A549 (cell line): ENCODE measurements at regions of chr14 and their contacts with region 1.

Region 1: DNA sequence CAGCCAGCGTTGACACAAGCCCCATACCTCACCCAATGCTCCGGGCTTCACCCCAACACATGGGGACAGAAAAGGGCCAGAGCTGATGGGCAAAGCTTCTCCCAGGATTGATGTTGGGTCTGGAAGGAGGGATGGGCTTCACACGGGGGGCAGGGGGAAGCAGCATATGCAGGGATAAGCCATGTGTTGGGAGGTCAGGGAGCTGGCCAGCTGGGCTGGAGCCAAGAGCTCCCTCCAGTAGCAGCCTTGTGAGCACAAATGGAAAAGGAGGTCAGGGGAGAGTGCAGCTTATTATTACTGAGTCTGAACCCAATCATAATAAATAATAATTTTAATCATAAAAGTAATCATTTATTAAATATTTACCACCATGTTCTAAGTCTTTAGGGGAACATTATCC is 9.3 kb downstream of the PLEKHD1 start:
- DNase-seq: no peak
- ATAC-seq: no peak
- H3K4me3 ChIP-seq: no peak overlapping the region
- H3K27ac ChIP-seq: no peak overlapping the region
- H3K4me1 ChIP-seq: no peaks in the 10 kb centered on the region
- CTCF ChIP-seq: no peak
- EP300 ChIP-seq: no peak
- POLR2A ChIP-seq: no peak
- RAD21 ChIP-seq: no peak

Region 2: DNA sequence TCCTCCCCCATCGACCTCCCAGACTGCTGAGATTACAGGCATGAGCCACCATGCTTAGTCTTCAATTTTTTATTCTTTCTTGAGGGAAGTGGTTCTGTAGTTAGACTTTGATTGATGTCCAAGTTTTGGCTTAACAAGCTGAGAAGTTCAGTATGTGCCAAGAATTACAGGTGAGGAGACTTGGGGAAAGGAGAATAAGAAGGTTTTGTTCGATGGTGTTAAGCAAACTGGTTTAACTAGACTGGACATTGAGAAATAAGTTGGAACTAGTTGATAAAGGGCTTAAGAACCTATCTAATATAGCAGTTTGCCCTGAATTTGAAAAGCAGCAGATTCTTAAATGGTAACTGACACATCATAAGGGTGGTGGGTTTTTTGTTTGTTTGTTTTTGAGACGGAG is 41.8 kb before region 1 on chr14:
- CTCF ChIA-PET with region 1: no interaction called
- POLR2A ChIA-PET with region 1: no interaction called
- DNase-seq: no peak
- ATAC-seq: no peak
- H3K4me3 ChIP-seq: no peak overlapping the region
- H3K27ac ChIP-seq: no peak overlapping the region
- H3K4me1 ChIP-seq: no peaks in the 10 kb centered on the region
- CTCF ChIP-seq: no peak
- EP300 ChIP-seq: no peak
- POLR2A ChIP-seq: no peak
- RAD21 ChIP-seq: no peak

Region 3: GRCh38 chr14:69475194-69475818 is 18.5 kb before region 1 on chr14:
- CTCF ChIA-PET with region 1: interaction called, 23 read pairs
- POLR2A ChIA-PET with region 1: no interaction called
- DNase-seq: peak; percentile 35 to 56
- ATAC-seq: peak; percentile 80 to 87; a peak in 4 of 6 replicates
- H3K4me3 ChIP-seq: no peak overlapping the region
- H3K27ac ChIP-seq: no peak overlapping the region
- H3K4me1 ChIP-seq: no peaks in the 10 kb centered on the region
- CTCF ChIP-seq: peak; percentile 47
- EP300 ChIP-seq: no peak
- POLR2A ChIP-seq: no peak
- RAD21 ChIP-seq: 0 out of 5 replicates have a peak, but pooled peaks of 1 of the 2 experiments have one; percentile 12